CD8-positive, alpha-beta T cell (primary cell): ENCODE measurements at regions of chr15 and their contacts with region 1.

Region 1: GRCh38 chr15:50182219-50183013 is 420 bp downstream of the SLC27A2 start:
- DNase-seq: peak in 7 of 9 experiments; percentile 13 to 61 (median 40)
- ATAC-seq: peak; percentile 54
- H3K4me3 ChIP-seq: peak overlapping the region; percentile 56 to 59
- H3K4me3 Mint-ChIP-seq: peak overlapping the region; percentile 92
- H3K27ac ChIP-seq: no peak overlapping the region
- H3K27ac Mint-ChIP-seq: no peak overlapping the region
- H3K4me1 ChIP-seq: peaks cover 6% of the 10 kb centered on the region
- H3K4me1 Mint-ChIP-seq: peaks cover 18% of the 10 kb centered on the region
- H3K27me3 ChIP-seq: peaks cover 0 to 3% of the 10 kb centered on the region in 2 experiments
- H3K27me3 Mint-ChIP-seq: peaks cover 29% of the 10 kb centered on the region
- CTCF ChIP-seq: no peak

Region 2: GRCh38 chr15:50162988-50163718 is 19.3 kb before region 1 on chr15:
- CTCF ChIA-PET with region 1: no interaction called
- POLR2A ChIA-PET with region 1: no interaction called
- intact Hi-C with region 1: loop called in 1 of 2 experiments (anchors 1 kb)
- DNase-seq: no peak
- ATAC-seq: no peak
- H3K4me3 ChIP-seq: no peak overlapping the region
- H3K4me3 Mint-ChIP-seq: no peak overlapping the region
- H3K27ac ChIP-seq: no peak overlapping the region
- H3K27ac Mint-ChIP-seq: no peak overlapping the region
- H3K4me1 ChIP-seq: no peaks in the 10 kb centered on the region
- H3K4me1 Mint-ChIP-seq: no peaks in the 10 kb centered on the region
- H3K27me3 ChIP-seq: no peaks in the 10 kb centered on the region
- H3K27me3 Mint-ChIP-seq: peaks cover 16% of the 10 kb centered on the region
- CTCF ChIP-seq: no peak

Region 3: GRCh38 chr15:50280271-50280670 is 97.9 kb after region 1 on chr15:
- CTCF ChIA-PET with region 1: no interaction called
- POLR2A ChIA-PET with region 1: no interaction called
- intact Hi-C with region 1: loop called in 1 of 2 experiments (anchors 10 kb)
- DNase-seq: no peak
- ATAC-seq: no peak
- H3K4me3 ChIP-seq: no peak overlapping the region
- H3K4me3 Mint-ChIP-seq: no peak overlapping the region
- H3K27ac ChIP-seq: no peak overlapping the region
- H3K27ac Mint-ChIP-seq: no peak overlapping the region
- H3K4me1 ChIP-seq: no peaks in the 10 kb centered on the region
- H3K4me1 Mint-ChIP-seq: no peaks in the 10 kb centered on the region
- H3K27me3 ChIP-seq: no peaks in the 10 kb centered on the region
- H3K27me3 Mint-ChIP-seq: no peaks in the 10 kb centered on the region
- CTCF ChIP-seq: no peak

Region 4: DNA sequence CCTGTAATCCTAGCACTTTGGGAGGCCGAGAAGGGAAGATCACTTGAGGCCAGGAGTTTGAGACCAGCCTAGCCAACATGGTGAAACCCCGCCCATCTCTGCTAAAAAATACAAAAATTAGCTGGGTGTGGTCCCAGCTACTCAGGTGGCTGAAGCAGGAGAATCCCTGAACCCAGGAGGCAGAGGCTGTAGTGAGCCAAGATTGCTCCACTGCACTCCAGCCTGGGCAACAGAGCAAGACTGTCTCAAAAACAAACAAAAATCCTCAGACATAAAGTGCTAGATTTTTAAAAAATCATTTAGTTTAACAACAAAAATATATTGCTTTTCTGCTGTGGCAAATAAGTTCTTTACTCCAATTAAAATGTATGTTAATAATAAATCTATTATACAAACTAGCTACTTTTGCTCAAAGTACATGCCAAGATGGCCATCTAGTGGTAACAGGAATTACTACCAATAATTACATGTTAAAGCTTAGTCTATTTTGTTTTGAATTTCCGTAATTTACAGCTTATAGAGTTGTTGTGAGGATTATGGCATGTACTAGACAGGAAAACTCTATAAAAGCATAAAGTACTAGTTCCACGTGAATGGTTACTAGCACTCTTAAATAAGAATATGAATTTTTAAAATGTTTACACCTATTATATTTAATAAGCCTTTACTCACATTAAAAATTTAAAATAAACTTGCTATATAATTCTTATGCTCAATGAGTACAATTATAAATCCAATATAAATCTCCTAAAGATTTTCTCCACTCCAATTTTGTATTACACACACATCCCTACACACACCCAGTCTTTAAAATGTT is 133.6 kb after region 1 on chr15:
- CTCF ChIA-PET with region 1: interaction called, 15 read pairs
- POLR2A ChIA-PET with region 1: no interaction called
- intact Hi-C with region 1: loop called in 1 of 2 experiments (anchors 5 kb)
- DNase-seq: peak in 2 of 9 experiments; percentile 58 to 71
- ATAC-seq: peak; percentile 29
- H3K4me3 ChIP-seq: no peak overlapping the region
- H3K4me3 Mint-ChIP-seq: no peak overlapping the region
- H3K27ac ChIP-seq: no peak overlapping the region
- H3K27ac Mint-ChIP-seq: no peak overlapping the region
- H3K4me1 ChIP-seq: no peaks in the 10 kb centered on the region
- H3K4me1 Mint-ChIP-seq: peaks cover 19% of the 10 kb centered on the region
- H3K27me3 ChIP-seq: no peaks in the 10 kb centered on the region
- H3K27me3 Mint-ChIP-seq: no peaks in the 10 kb centered on the region
- CTCF ChIP-seq: peak; percentile 97